Activated B cell treated with CpG ODN at 0.5 μM for 24 hours (primary cell): ENCODE measurements at regions of chr3 and their contacts with region 1.

Region 1: GRCh38 chr3:9932843-9933560 is 632 bp upstream of the CRELD1 start:
- DNase-seq: peak; percentile 83
- ATAC-seq: peak; percentile 71
- H3K4me3 Mint-ChIP-seq: peak overlapping the region; percentile 98
- H3K27ac Mint-ChIP-seq: peak overlapping the region; percentile 98
- H3K4me1 Mint-ChIP-seq: peaks cover 41% of the 10 kb centered on the region
- H3K27me3 Mint-ChIP-seq: no peaks in the 10 kb centered on the region
- CTCF ChIP-seq: peak; percentile 71

Region 2: GRCh38 chr3:9649791-9650521 is 283.0 kb before region 1 on chr3:
- CTCF ChIA-PET with region 1: no interaction called
- POLR2A ChIA-PET with region 1: interaction called, 7 read pairs
- intact Hi-C with region 1: loop called (anchors 5 kb)
- DNase-seq: peak; percentile 25
- ATAC-seq: peak; percentile 59
- H3K4me3 Mint-ChIP-seq: peak overlapping the region; percentile 94
- H3K27ac Mint-ChIP-seq: peak overlapping the region; percentile 84
- H3K4me1 Mint-ChIP-seq: peaks cover 54% of the 10 kb centered on the region
- H3K27me3 Mint-ChIP-seq: no peaks in the 10 kb centered on the region
- CTCF ChIP-seq: no peak

Region 3: GRCh38 chr3:9743548-9743947 is 189.5 kb before region 1 on chr3:
- CTCF ChIA-PET with region 1: no interaction called
- POLR2A ChIA-PET with region 1: no interaction called
- intact Hi-C with region 1: no loop called
- DNase-seq: no peak
- ATAC-seq: no peak
- H3K4me3 Mint-ChIP-seq: no peak overlapping the region
- H3K27ac Mint-ChIP-seq: no peak overlapping the region
- H3K4me1 Mint-ChIP-seq: no peaks in the 10 kb centered on the region
- H3K27me3 Mint-ChIP-seq: no peaks in the 10 kb centered on the region
- CTCF ChIP-seq: no peak

Region 4: DNA sequence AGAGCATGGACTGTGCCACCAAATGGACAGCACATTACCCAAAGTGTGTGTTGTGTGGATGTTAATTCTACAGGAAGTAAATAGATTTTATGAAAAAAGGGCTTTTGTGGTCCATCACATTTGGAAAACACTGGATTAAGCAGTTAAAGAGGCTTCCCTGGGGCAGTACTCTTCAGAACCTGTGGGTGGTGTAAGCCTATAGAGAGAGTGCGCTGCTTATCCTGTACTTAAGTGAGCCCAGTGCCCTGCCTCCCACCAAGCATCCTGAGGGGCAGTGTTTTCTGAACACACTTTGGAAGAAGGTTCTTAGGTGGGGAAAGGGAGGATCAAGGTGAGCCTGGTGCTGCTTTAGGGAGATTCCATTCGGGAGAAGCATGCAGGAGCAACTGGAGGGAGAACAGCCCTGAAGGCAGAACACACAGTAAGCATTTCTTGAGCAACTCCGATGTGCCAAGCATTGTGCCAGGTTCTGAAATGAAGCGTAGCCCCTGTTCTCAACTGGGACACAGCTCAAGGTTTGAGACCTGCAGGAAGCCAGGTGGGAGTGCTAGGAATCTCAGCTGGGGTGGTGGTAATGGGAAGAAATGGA is 112.0 kb before region 1 on chr3:
- CTCF ChIA-PET with region 1: no interaction called
- POLR2A ChIA-PET with region 1: no interaction called
- intact Hi-C with region 1: no loop called
- DNase-seq: no peak
- ATAC-seq: no peak
- H3K4me3 Mint-ChIP-seq: no peak overlapping the region
- H3K27ac Mint-ChIP-seq: no peak overlapping the region
- H3K4me1 Mint-ChIP-seq: no peaks in the 10 kb centered on the region
- H3K27me3 Mint-ChIP-seq: no peaks in the 10 kb centered on the region
- CTCF ChIP-seq: no peak

Region 5: DNA sequence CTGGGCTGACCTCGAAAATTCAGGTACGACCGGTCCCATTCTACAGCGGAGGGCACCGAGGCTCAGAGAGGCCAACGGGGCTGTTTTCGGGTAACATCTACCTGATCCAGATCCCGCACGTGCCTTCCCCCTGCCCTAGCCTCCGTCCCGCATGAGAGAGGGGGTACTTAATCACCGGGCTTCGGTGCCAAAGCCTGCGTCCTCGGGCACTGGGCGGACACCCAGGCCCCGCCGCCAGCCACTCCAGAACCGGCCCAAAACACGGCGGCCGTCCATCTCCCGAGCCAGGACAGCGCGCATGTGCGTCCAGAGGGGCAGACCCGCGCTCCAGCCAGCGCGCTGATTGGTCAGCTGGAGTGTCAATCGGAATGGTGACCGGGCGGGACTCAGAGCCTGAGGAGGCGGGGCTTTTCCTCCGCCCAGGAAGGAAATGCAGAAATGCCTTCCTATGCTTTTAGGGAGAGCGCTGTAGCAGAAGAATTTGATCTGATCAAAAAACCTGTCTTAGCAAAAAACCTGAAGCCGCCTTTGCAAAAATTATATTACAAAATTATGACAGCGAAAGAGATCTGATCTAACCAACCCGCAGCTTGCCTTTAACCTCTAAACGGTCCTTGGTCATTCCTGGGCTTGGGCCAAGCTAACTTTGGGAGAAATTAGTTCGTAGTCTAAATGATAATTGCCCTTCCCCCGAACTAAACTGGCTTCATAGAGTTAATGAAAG is 89.1 kb before region 1 on chr3 and contains the start of gene RPUSD3:
- CTCF ChIA-PET with region 1: interaction called, 4 read pairs
- POLR2A ChIA-PET with region 1: interaction called, 6 read pairs
- intact Hi-C with region 1: loop called (anchors 5 kb)
- DNase-seq: peak; percentile 95
- ATAC-seq: peak; percentile 100
- H3K4me3 Mint-ChIP-seq: peak within 1 kb of the TSS; percentile 98
- H3K27ac Mint-ChIP-seq: peak within 1 kb of the TSS; percentile 86
- H3K4me1 Mint-ChIP-seq: peaks cover 20% of the 10 kb centered on the region
- H3K27me3 Mint-ChIP-seq: no peaks in the 10 kb centered on the region
- CTCF ChIP-seq: no peak
- total RNA-seq, gene RPUSD3: 49.5 and 55.7 TPM in 2 replicates

Region 6: DNA sequence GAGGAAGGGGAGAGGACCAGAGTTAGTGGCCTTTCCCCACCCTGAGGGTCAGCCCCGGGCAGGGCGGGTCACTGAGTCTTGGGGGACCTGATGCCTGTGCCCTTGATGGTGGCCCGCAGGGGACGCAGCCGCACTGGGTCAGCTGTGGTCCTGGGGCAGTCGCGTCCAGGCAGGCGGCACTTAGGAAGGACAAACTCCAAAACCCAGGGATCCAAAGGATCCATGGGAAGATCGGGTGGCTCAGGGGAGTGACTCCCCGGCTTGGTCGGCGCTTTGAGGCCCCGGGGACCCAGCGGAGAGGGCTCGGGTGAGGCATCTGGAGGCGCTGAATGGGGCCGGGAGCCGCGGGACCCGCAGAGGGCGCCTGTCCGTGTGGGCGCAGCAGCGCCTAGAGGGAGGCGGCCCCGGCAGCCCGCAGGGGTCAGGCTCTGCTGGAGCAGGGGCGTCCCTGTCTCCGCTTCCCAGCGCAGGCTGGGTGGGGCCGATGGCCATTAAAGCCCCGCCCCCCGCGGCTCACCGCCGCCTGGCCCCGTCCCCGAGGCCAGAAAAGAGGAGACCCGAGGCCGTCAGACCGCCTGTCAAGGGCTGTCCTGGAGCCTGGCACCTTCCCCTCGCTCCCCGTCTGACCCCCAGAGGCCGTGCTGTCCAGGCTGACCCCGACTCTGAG is 70.5 kb before region 1 on chr3:
- CTCF ChIA-PET with region 1: no interaction called
- POLR2A ChIA-PET with region 1: no interaction called
- intact Hi-C with region 1: no loop called
- DNase-seq: peak; percentile 38
- ATAC-seq: peak; percentile 88
- H3K4me3 Mint-ChIP-seq: peak overlapping the region; percentile 52
- H3K27ac Mint-ChIP-seq: no peak overlapping the region
- H3K4me1 Mint-ChIP-seq: peaks cover 2% of the 10 kb centered on the region
- H3K27me3 Mint-ChIP-seq: peaks cover 9% of the 10 kb centered on the region
- CTCF ChIP-seq: no peak

Region 7: DNA sequence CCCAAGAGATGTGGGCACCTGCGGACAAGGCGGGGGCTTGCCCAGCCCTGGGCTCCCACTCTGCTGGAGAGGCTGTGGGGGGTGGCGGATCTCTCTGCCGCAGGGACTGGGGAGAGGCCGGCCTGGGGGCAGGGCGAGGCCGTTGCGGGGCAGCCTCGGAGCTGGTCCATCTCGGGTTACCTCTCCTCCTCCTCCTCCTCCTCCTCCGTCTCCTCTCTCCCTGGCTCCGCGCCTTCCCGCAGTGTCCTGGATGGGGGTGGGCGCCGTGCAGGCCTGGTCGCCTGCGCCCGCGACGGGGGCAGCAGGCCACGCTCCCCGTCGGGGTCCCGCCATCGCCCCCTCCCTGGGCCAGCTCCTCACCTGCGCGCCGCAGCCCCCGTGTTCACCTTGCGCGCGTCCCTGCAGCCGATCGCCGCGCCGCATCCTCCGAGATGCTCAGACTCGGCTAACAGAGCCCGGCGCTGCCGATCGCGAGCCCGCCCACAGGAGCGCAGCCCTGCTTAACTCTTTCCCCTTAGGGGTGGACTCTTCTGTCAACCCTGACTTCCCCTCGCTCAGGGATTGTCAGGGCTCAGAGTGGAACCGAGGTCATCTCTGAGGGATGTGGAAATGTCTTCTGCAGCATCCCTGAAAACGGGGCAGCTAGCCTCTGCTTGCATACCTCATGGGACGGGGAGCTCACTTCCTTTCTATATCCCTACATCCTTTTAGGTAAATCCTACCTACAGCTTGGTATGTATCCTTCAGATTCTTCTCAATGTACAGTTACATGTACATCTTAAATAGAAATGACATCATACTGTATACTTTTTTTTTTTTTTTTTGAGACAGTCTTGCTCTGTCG is 19.2 kb after region 1 on chr3 and contains the start of gene PRRT3:
- CTCF ChIA-PET with region 1: interaction called, 29 read pairs
- POLR2A ChIA-PET with region 1: interaction called, 76 read pairs
- intact Hi-C with region 1: loop called (anchors 1 kb)
- DNase-seq: peak; percentile 41
- ATAC-seq: peak; percentile 90
- H3K4me3 Mint-ChIP-seq: peak within 1 kb of the TSS; percentile 85
- H3K27ac Mint-ChIP-seq: no peak within 1 kb of the TSS
- H3K4me1 Mint-ChIP-seq: peaks cover 15% of the 10 kb centered on the region
- H3K27me3 Mint-ChIP-seq: no peaks in the 10 kb centered on the region
- CTCF ChIP-seq: no peak
- total RNA-seq, gene PRRT3: 4.2 and 4.3 TPM in 2 replicates

Region 8: DNA sequence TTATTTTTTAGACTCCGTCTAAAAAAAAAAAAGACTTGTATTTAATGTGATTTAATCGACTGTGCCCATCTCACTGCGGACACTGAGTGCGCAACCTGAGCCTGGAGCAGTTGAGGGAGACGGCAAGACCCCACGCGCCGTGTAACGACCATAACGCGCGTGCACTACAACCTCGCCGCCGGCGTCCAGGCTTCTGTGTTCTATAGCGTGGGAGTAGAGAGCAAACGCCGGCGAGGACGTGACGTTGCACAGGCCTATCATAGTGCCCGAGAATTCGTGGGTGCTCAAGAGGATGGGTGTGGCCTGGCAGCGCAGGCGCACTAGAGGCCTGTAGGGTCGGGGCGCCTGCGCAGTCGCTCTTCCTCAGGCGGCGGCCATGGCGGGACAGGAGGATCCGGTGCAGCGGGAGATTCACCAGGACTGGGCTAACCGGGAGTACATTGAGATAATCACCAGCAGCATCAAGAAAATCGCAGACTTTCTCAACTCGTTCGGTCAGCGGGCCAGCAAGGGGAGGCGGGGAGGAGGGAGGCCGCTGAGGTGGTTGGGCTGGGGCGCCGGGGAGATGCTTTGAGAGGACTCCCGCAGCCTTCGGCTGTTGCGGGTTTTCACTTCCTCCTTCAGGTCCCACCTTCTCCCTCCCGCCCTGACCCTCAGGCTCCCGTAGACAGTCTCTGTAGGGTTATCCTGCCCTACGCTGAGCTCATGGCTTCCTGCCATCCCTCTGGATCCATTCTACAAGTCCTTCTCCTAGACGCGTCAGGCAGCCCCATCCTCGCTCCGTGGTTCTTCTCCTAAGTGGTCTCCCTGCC is 182.5 kb after region 1 on chr3 and contains the start of gene BRK1:
- CTCF ChIA-PET with region 1: no interaction called
- POLR2A ChIA-PET with region 1: interaction called, 5 read pairs
- intact Hi-C with region 1: loop called (anchors 1 kb)
- DNase-seq: peak; percentile 85
- ATAC-seq: peak; percentile 96
- H3K4me3 Mint-ChIP-seq: peak within 1 kb of the TSS; percentile 100
- H3K27ac Mint-ChIP-seq: peak within 1 kb of the TSS; percentile 99
- H3K4me1 Mint-ChIP-seq: peaks cover 40% of the 10 kb centered on the region
- H3K27me3 Mint-ChIP-seq: no peaks in the 10 kb centered on the region
- CTCF ChIP-seq: no peak
- total RNA-seq, gene BRK1: 123 and 141 TPM in 2 replicates

Region 9: DNA sequence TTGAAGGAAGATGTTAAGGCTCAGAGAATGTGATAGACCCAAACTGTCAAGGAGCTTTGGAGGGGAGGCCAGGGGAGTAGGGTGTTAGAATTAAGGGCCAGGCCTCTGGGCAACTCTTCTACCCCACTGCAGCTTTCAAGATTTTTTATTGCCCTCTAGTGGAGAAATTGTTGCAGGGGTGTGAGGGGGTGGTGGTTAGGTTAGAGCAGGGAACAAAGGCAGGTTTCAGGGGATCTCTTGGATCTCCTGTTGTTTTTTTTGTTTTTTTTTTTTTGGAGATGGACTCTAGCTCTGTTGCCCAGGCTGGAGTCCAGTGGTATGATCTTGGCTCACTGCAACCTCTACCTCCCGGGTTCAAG is 389.3 kb after region 1 on chr3:
- CTCF ChIA-PET with region 1: interaction called, 5 read pairs
- POLR2A ChIA-PET with region 1: interaction called, 18 read pairs
- intact Hi-C with region 1: loop called (anchors 1 kb)
- DNase-seq: no peak
- ATAC-seq: no peak
- H3K4me3 Mint-ChIP-seq: no peak overlapping the region
- H3K27ac Mint-ChIP-seq: no peak overlapping the region
- H3K4me1 Mint-ChIP-seq: peaks cover 31% of the 10 kb centered on the region
- H3K27me3 Mint-ChIP-seq: peaks cover 9% of the 10 kb centered on the region
- CTCF ChIP-seq: no peak